CD4-positive, alpha-beta T cell (primary cell): ENCODE measurements at regions of chr7 and their contacts with region 1.

Region 1: DNA sequence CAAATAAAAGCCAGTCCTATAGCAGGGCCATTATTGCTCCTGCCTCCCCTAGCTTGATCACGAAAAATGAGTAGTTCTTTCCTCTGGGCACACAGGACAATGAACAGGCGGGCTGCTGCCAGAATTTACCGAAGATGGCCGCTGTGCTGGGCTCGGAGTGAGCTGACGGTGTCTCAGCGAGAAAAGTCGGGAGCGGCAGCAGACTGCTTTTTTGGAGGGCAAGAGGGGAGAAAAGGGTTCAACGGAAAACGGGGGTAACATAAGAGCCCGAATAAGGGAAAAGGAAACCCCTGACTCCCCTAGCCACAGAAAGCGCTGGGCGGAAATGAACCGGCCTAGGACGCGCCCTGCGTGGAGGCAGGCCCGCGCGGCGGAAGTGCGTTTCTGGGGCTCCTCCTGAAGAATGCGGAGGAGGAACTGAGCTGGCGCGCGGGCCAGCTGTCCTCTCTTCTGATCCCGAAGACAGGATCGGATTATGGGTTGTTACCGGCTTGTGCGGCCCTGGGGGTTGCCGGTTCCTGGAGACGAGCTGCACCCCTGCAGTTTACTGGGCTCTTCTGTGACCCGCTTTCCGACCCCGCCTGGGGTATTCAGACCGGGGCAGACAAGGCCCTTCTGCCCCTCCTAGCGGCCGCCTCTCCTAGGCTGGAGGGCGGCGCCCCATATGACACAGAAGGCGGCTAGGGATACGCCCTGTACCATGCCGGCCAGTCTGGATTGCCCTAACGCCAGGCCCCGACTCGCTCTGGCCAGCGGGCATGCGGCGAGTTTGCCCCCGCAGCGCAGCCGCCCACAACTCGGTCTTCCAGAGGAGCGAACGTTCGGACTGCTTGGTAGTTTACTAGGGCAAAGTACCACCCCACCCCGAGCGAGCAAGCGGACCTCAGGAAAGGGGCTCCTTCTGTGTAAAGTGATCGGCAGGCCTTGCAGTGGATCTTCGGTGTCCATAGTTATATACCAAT is 30.1 kb upstream of the KMT2E start:
- DNase-seq: peak; percentile 69 to 91 (median 78)
- ATAC-seq: peak; percentile 82
- H3K4me3 ChIP-seq: peak overlapping the region; percentile 80
- H3K4me3 Mint-ChIP-seq: peak overlapping the region; percentile 100
- H3K27ac ChIP-seq: peak overlapping the region; percentile 96 to 98
- H3K27ac Mint-ChIP-seq: peak overlapping the region; percentile 99
- H3K4me1 ChIP-seq: peaks cover 26% of the 10 kb centered on the region
- H3K4me1 Mint-ChIP-seq: peaks cover 63% of the 10 kb centered on the region
- H3K27me3 ChIP-seq: no peaks in the 10 kb centered on the region
- H3K27me3 Mint-ChIP-seq: no peaks in the 10 kb centered on the region
- CTCF ChIP-seq: peak; percentile 54

Region 2: DNA sequence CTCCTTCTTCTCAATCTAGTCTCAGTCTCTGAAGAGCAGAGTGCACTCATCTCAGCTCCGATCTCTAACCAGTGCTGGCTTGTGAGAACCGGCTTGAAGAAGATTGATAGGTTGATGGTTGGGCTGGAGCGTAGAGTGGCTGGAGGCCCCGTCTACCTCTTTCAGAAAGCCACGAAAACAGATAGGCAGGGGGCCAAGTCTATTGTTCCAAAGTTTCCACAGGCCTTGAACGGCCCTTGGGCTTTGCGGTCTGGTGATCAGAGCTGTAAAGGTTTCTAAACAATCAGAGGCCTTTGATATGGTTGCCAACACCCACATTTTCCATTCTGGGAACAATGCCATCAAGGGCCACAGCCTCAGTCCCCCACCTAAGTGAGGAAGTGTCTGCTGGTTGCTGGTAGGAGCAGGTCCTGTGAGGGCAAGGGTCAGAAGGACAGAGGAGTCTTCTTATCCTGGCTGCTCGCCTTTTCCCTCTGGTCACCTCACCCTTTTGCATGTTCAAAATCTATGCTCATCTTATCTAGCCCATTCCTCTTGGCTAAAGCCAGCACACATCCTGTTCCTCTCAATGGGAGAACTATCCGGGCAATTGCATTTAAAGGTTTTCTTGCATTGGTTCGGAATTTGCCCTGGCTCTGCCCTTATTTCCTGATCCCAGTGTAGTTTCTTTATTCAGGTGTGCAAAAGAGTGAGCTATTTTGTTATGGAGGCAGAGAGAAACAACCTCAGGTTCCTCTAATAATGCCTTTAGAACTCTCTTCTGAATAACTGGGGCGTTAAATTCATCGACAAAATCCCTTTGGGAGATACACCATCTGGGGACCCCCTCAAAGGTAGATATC is 40.1 kb before region 1 on chr7:
- CTCF ChIA-PET with region 1: interaction called, 16 read pairs
- POLR2A ChIA-PET with region 1: interaction called, 22 read pairs
- intact Hi-C with region 1: loop called (anchors 2 kb)
- DNase-seq: peak; percentile 33 to 87 (median 53)
- ATAC-seq: peak; percentile 34
- H3K4me3 ChIP-seq: peak overlapping the region; percentile 5
- H3K4me3 Mint-ChIP-seq: peak overlapping the region; percentile 91
- H3K27ac ChIP-seq: peak overlapping the region; percentile 97 to 98
- H3K27ac Mint-ChIP-seq: peak overlapping the region; percentile 100
- H3K4me1 ChIP-seq: peaks cover 67% of the 10 kb centered on the region
- H3K4me1 Mint-ChIP-seq: peaks cover 73% of the 10 kb centered on the region
- H3K27me3 ChIP-seq: no peaks in the 10 kb centered on the region
- H3K27me3 Mint-ChIP-seq: no peaks in the 10 kb centered on the region
- CTCF ChIP-seq: no peak

Region 3: DNA sequence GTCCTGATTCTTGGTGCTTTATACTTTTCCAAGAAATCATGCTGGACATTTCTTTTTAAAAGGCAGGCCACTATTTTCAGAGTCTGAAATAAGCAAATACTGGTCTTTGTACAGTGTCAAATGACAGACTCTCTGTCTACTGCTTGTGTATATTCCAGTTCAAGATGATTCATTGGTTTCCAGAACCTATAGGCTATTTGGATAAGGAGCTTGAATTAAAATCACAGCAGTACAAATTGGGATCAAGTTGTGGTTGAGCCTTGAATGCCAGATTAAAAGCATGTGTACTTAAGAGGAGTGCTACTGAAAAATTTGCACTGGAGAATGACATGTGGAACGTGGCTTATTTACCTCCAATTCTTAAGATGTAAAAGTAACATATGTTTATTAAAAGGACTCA is 40.9 kb after region 1 on chr7:
- CTCF ChIA-PET with region 1: interaction called, 12 read pairs
- POLR2A ChIA-PET with region 1: interaction called, 9 read pairs
- intact Hi-C with region 1: no loop called
- DNase-seq: no peak
- ATAC-seq: no peak
- H3K4me3 ChIP-seq: no peak overlapping the region
- H3K4me3 Mint-ChIP-seq: peak overlapping the region; percentile 68
- H3K27ac ChIP-seq: no peak overlapping the region
- H3K27ac Mint-ChIP-seq: no peak overlapping the region
- H3K4me1 ChIP-seq: peaks cover 38% of the 10 kb centered on the region
- H3K4me1 Mint-ChIP-seq: peaks cover 95% of the 10 kb centered on the region
- H3K27me3 ChIP-seq: no peaks in the 10 kb centered on the region
- H3K27me3 Mint-ChIP-seq: no peaks in the 10 kb centered on the region
- CTCF ChIP-seq: no peak

Region 4: DNA sequence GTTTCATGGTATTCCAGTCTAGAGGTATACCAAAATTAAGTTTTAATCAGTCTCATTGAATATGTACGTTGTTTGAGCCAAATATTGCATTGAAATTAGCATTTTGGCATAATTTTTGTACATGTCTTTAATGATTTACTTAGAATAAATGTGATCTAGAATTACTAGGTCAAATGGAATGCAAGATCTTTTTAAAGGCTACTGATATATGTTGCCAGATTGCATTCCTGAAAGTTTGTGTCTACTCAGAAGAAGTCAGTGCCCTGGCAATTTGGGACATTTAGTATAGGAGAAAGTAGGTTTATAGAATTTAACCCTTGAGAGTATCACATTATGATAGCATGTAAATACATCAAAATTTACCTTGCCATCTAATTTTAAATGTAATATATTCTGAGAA is 62.6 kb after region 1 on chr7:
- CTCF ChIA-PET with region 1: interaction called, 59 read pairs
- POLR2A ChIA-PET with region 1: interaction called, 34 read pairs
- intact Hi-C with region 1: loop called (anchors 1 kb)
- DNase-seq: no peak
- ATAC-seq: no peak
- H3K4me3 ChIP-seq: no peak overlapping the region
- H3K4me3 Mint-ChIP-seq: peak overlapping the region; percentile 20
- H3K27ac ChIP-seq: no peak overlapping the region
- H3K27ac Mint-ChIP-seq: no peak overlapping the region
- H3K4me1 ChIP-seq: peaks cover 20% of the 10 kb centered on the region
- H3K4me1 Mint-ChIP-seq: peaks cover 65% of the 10 kb centered on the region
- H3K27me3 ChIP-seq: no peaks in the 10 kb centered on the region
- H3K27me3 Mint-ChIP-seq: no peaks in the 10 kb centered on the region
- CTCF ChIP-seq: no peak

Region 5: DNA sequence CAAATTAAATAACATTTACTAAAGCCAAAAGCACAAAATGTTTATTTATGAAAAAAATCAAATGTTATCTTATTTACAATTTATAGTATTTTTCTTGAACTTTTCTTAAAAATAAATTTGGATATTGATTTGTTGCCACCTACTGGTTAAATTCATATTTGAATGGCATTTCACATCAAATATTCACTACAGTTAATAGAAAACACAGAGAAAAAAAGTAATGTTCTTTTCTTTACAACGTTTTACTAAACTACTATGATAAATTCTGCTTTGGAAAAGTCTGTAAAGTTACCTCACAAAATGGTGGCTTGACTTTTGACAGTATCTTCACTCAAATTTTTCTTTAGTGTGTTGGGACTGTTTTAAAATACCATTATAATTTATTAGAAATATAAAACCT is 352.1 kb after region 1 on chr7:
- CTCF ChIA-PET with region 1: no interaction called
- POLR2A ChIA-PET with region 1: interaction called, 3 read pairs
- intact Hi-C with region 1: loop called (anchors 2 to 5 kb)
- DNase-seq: peak in 2 of 14 experiments; percentile 27 to 41
- ATAC-seq: no peak
- H3K4me3 ChIP-seq: no peak overlapping the region
- H3K4me3 Mint-ChIP-seq: no peak overlapping the region
- H3K27ac ChIP-seq: no peak overlapping the region
- H3K27ac Mint-ChIP-seq: no peak overlapping the region
- H3K4me1 ChIP-seq: peaks cover 4% of the 10 kb centered on the region
- H3K4me1 Mint-ChIP-seq: peaks cover 36% of the 10 kb centered on the region
- H3K27me3 ChIP-seq: no peaks in the 10 kb centered on the region
- H3K27me3 Mint-ChIP-seq: no peaks in the 10 kb centered on the region
- CTCF ChIP-seq: peak; percentile 76

Region 6: DNA sequence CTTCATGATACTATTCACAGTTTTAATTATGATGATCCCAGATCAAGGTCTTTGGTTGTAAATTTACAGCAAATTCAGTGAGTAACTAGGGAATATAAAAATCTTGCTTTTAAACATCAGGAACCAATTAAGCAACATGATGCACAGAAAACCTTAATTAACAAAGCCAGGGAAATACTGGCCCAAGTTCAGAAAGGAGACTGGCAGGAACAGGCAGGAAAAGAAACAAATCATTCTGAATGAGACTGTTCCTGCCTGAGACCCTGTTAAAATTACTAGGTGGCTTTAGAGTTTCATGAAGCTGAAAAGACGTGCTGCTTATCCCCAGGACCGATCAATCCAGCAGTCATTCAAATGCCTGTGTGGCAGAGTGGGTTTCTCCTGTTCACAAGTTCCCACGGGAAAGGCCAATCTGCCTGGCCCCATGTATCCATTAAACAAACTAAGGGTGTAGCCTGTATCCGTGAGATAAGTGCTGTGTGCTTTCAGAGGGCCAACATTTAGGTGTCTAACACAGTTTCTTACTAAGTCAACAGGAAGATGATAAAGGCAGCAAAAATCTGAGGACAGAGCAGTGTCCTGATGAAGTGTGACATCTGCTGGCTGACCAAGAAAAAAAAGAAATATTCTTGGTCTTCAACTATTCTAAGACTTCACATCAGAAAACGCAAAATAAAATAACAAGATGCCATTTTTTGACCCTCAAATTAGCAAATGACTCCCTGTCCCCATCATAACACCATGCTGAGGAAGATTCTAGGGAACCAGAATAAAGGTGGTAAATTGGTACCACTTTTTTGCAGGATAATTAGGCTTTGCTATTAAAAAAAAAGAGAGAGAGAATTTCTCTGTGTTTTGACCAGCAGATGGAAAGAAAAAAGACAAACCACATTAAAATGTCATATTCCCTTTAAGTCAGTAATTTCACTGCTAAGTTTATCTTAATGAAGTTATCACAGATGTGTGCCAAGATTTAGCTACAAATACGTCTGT is 504.0 kb after region 1 on chr7:
- CTCF ChIA-PET with region 1: no interaction called
- POLR2A ChIA-PET with region 1: no interaction called
- intact Hi-C with region 1: loop called in 1 of 2 experiments (anchors 2 kb)
- DNase-seq: peak in 4 of 14 experiments; percentile 1 to 54 (median 48)
- ATAC-seq: no peak
- H3K4me3 ChIP-seq: no peak overlapping the region
- H3K4me3 Mint-ChIP-seq: no peak overlapping the region
- H3K27ac ChIP-seq: no peak overlapping the region
- H3K27ac Mint-ChIP-seq: no peak overlapping the region
- H3K4me1 ChIP-seq: no peaks in the 10 kb centered on the region
- H3K4me1 Mint-ChIP-seq: peaks cover 4% of the 10 kb centered on the region
- H3K27me3 ChIP-seq: no peaks in the 10 kb centered on the region
- H3K27me3 Mint-ChIP-seq: no peaks in the 10 kb centered on the region
- CTCF ChIP-seq: peak; percentile 41